ENCODE measurements at regions of chr3 and their contacts with region 1.

Region 1: GRCh38 chr3:12175844-12176453 is 17.2 kb upstream of the TIMP4 start:
- DNase-seq: peak; percentile 74
- H3K4me3 ChIP-seq: no peak overlapping the region; a peak in 1 of 4 replicates
- H3K27ac ChIP-seq: no peak overlapping the region
- H3K4me1 ChIP-seq: peaks cover 0 to 9% of the 10 kb centered on the region in 2 experiments; a peak in 2 of 4 replicates
- H3K27me3 ChIP-seq: no peaks in the 10 kb centered on the region
- CTCF ChIP-seq: peak; percentile 73
- EP300 ChIP-seq: no peak
- RAD21 ChIP-seq: peak; percentile 88

Region 2: GRCh38 chr3:11755276-11755675 is 420.7 kb before region 1 on chr3:
- CTCF ChIA-PET with region 1: no interaction called
- POLR2A ChIA-PET with region 1: no interaction called
- DNase-seq: no peak
- H3K4me3 ChIP-seq: no peak overlapping the region
- H3K27ac ChIP-seq: no peak overlapping the region
- H3K4me1 ChIP-seq: no peaks in the 10 kb centered on the region
- H3K27me3 ChIP-seq: no peaks in the 10 kb centered on the region
- CTCF ChIP-seq: no peak
- EP300 ChIP-seq: no peak
- RAD21 ChIP-seq: no peak

Region 3: DNA sequence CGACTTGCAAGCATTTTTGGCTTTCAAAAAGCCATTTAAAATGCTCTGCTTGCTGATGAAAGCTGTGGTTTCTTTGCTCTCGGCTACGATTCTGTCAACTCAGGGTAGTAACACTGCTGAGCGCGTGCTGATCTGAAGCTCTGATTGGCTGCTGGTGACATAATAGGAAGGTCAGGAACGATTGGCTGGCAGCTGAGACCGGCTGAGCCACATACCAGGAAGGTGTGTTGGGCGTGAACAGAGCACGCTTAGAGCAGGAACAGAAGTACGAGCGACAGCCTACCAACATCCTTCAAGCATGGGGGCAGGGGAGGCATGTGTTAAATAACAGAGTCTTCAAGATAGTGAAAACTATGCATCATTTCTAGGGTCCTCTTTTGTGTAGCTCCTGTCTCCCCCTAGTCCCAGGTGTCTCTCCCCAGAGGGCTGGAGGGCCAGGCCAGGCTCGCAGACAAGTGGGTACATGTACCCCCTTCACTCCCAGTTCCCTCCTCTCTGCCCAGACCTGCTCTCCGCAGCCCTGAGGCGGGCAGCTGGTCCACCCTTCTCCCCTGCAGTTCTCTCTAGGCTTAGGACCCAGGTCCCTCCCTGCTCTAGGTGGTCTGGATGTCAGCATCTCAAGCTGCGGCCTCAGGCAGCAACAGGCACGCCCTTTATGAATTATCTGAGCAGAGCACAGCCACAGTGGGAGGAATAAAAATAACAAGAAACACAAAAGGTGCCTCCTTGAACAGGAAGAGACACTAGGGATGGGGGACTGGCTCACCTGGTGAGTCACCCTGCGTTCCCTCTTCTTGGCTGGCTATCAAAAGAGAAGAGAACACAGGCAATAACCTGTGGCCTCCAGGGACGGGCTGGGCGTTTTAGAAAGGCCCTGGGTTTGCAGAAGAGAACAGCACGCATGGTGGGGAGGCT is 405.2 kb before region 1 on chr3:
- CTCF ChIA-PET with region 1: no interaction called
- POLR2A ChIA-PET with region 1: no interaction called
- DNase-seq: peak; percentile 62
- H3K4me3 ChIP-seq: no peak overlapping the region
- H3K27ac ChIP-seq: no peak overlapping the region
- H3K4me1 ChIP-seq: peaks cover 0 to 8% of the 10 kb centered on the region in 2 experiments; a peak in 2 of 4 replicates
- H3K27me3 ChIP-seq: no peaks in the 10 kb centered on the region
- CTCF ChIP-seq: no peak
- EP300 ChIP-seq: no peak
- RAD21 ChIP-seq: no peak

Region 4: DNA sequence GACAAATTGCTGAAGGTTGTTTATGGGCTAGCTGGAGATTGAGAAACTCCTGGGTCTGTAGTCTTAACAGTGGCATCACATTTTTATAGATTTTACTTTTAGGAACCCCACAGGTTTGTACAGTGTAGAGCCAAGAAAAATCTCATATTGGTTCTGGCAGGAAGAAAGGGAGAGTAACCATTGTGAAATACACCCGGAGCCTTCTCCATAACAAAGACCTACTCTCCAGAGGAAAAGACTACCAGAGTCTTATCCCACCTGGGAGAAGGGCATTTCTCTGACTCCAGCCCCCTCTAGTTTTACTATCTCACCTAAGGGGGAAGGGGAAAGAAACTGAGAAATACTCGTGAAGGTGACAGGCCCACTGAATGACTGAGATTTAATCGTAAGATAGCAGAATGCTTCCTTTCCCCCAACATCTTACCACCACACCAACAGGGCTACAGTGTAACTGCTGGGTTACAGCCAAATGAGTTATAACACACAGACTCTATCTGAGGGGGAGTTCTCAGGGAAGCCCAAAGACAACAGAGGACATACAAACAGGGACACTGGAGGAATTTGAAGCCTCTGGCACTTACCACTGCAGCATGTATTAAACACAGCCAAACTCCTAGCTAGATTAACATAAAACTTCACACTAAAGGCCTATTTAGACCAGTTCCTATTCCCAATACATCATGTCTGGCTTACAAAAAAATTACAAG is 115.7 kb before region 1 on chr3:
- CTCF ChIA-PET with region 1: interaction called, 10 read pairs
- POLR2A ChIA-PET with region 1: no interaction called
- DNase-seq: no peak
- H3K4me3 ChIP-seq: no peak overlapping the region
- H3K27ac ChIP-seq: no peak overlapping the region
- H3K4me1 ChIP-seq: peaks cover 0 to 16% of the 10 kb centered on the region in 2 experiments; a peak in 2 of 4 replicates
- H3K27me3 ChIP-seq: no peaks in the 10 kb centered on the region
- CTCF ChIP-seq: no peak
- EP300 ChIP-seq: no peak
- RAD21 ChIP-seq: no peak

Region 5: DNA sequence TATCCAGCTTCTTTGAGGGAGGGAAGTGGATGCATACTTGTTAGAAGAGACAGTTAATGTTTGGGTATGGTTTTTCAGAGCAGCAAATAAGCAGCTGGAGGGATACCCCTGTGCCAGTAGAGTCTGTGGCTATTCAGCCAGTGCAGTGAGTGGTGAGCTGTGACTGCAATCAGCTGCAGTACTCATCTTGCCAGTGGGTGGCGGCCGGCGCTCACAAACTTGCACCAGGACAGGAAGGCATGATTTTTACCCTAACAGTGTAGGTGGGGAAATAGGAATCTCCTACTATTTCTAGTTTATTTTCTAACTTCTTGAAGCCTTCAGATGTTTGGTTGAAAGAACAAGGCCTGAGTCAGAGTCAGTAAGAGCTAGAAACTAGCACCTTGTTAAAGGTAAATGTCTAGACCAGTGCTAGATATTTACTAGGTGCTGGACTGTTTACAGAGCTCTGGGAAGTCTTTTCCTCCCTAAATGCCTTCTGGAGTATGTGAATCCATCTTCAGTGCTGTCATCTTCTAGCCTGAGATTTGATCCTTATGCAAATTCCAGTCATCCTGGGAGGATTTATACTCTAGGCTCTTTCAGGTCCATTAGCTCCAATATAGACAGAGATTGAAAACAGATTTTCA is 40.8 kb before region 1 on chr3:
- CTCF ChIA-PET with region 1: interaction called, 229 read pairs
- POLR2A ChIA-PET with region 1: no interaction called
- DNase-seq: peak; percentile 63
- H3K4me3 ChIP-seq: peak overlapping the region in 1 of 2 experiments; percentile 23; a peak in 1 of 4 replicates
- H3K27ac ChIP-seq: no peak overlapping the region
- H3K4me1 ChIP-seq: peaks cover 0 to 10% of the 10 kb centered on the region in 2 experiments; a peak in 2 of 4 replicates
- H3K27me3 ChIP-seq: 0 out of 2 replicates have a peak, but pooled peaks cover 11% of the 10 kb centered on the region
- CTCF ChIP-seq: peak; percentile 96
- EP300 ChIP-seq: no peak
- RAD21 ChIP-seq: peak; percentile 94

Region 6: DNA sequence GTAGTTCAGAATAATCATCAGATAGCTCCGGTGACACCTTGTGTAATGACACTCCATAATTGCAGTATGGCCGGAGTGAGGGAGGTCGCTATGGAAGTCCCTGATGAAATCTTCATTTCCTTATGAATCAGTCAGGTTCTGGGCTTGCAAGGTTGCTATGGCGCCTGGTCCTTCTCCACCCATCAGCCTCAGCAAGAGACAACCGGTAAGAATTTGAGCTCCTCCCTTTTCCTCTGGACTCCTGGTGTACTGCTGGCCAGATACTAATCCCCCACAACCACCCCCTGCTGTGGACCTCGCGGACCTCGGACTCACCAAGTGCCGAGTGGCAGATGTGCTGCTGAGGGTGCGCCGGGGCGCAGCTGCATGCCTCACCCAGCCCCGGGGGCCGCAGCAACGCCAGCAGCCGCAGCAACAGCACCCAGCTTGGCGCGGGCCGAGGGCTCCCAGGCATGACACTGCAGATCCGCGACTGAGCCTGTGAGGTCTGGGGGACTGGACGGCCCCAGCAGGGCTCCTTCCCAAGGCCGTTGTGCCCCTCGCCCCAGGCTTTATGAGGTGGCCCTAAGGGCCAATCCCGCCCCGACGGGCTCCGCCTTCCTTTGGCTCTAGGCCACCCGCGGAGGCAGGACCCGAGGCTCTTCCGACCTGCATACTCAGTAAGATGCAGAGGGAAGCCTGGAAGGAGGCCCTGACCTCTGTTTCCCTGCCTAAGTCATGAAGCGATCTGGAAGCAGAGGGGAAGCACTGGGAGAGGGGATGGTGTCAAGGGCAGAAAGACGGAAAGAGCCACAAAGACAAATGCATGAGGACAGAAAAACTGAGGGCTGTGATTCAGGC is 17.3 kb before region 1 on chr3 and contains the start of gene TIMP4:
- CTCF ChIA-PET with region 1: interaction called, 19 read pairs
- POLR2A ChIA-PET with region 1: interaction called, 3 read pairs
- DNase-seq: no peak
- H3K4me3 ChIP-seq: no peak within 1 kb of the TSS
- H3K27ac ChIP-seq: no peak within 1 kb of the TSS
- H3K4me1 ChIP-seq: no peaks in the 10 kb centered on the region; a peak in 1 of 4 replicates
- H3K27me3 ChIP-seq: no peaks in the 10 kb centered on the region
- CTCF ChIP-seq: no peak
- EP300 ChIP-seq: no peak
- RAD21 ChIP-seq: no peak
- polyA plus RNA-seq, gene TIMP4: not detected in 2 replicates

Region 7: GRCh38 chr3:12198301-12198700 is 22.4 kb after region 1 on chr3:
- CTCF ChIA-PET with region 1: interaction called, 10 read pairs
- POLR2A ChIA-PET with region 1: no interaction called
- DNase-seq: no peak
- H3K4me3 ChIP-seq: no peak overlapping the region
- H3K27ac ChIP-seq: no peak overlapping the region
- H3K4me1 ChIP-seq: peaks cover 0 to 13% of the 10 kb centered on the region in 2 experiments
- H3K27me3 ChIP-seq: no peaks in the 10 kb centered on the region
- CTCF ChIP-seq: no peak
- EP300 ChIP-seq: no peak
- RAD21 ChIP-seq: no peak

Measured in SK-N-SH (cell line).